ENCODE measurements at regions of chr9 and their contacts with region 1.

Region 1: GRCh38 chr9:14693206-14693861 is at the start of gene ZDHHC21:
- DNase-seq: peak; percentile 53
- H3K4me3 Mint-ChIP-seq: peak within 1 kb of the TSS; percentile 97
- H3K27ac Mint-ChIP-seq: peak within 1 kb of the TSS; percentile 97
- H3K4me1 Mint-ChIP-seq: peaks cover 43% of the 10 kb centered on the region
- H3K27me3 Mint-ChIP-seq: peaks cover 12% of the 10 kb centered on the region
- total RNA-seq, gene ZDHHC21: 12.7 and 13.7 TPM in 2 replicates

Region 2: GRCh38 chr9:14670718-14671117 is 22.6 kb before region 1 on chr9:
- intact Hi-C with region 1: loop called (anchors 2 kb)
- DNase-seq: no peak
- H3K4me3 Mint-ChIP-seq: no peak overlapping the region
- H3K27ac Mint-ChIP-seq: peak overlapping the region; percentile 27
- H3K4me1 Mint-ChIP-seq: peaks cover 11% of the 10 kb centered on the region
- H3K27me3 Mint-ChIP-seq: no peaks in the 10 kb centered on the region

Region 3: DNA sequence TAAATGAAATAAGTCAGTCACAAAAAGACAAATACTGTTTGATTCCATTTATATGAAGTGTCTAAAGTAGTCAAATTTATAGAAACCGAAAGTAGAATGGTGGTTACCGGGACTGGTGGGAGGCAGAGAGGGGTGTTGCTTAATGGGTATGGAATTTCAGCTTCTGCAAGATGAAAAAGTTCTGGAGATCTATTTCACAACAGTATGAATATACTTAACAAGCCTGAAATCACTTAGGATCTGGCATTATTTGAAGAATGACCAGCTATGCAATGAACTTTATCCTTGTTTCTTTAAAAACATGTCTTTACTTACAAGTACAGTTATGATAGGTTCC is 231.5 kb after region 1 on chr9:
- intact Hi-C with region 1: no loop called
- DNase-seq: no peak
- H3K4me3 Mint-ChIP-seq: no peak overlapping the region
- H3K27ac Mint-ChIP-seq: no peak overlapping the region
- H3K4me1 Mint-ChIP-seq: no peaks in the 10 kb centered on the region
- H3K27me3 Mint-ChIP-seq: no peaks in the 10 kb centered on the region

Region 4: GRCh38 chr9:15543047-15543813 is 849.9 kb after region 1 on chr9:
- intact Hi-C with region 1: no loop called
- DNase-seq: no peak
- H3K4me3 Mint-ChIP-seq: no peak overlapping the region
- H3K27ac Mint-ChIP-seq: no peak overlapping the region
- H3K4me1 Mint-ChIP-seq: no peaks in the 10 kb centered on the region
- H3K27me3 Mint-ChIP-seq: peaks cover 13% of the 10 kb centered on the region

Measured in activated T-helper 1 cell treated with anti-CD3 and anti-CD28 coated beads, Interleukin-12 subunit alpha, Interleukin-12 subunit beta, Interleukin-2, Interleukin-4 antibody, amounts not matched to agents 30 ng/mL and 10 ng/mL and 1 ng/mL, durations not matched to agents 14 hours and 24 hours and 36 hours (primary cell).